ENCODE measurements at regions of chr18 and their contacts with region 1.

Region 1: GRCh38 chr18:46917108-46917802 is at the starts of genes KATNAL2 and PIAS2:
- DNase-seq: peak; percentile 83
- ATAC-seq: peak; percentile 92
- H3K4me3 Mint-ChIP-seq: peak within 1 kb of the TSS; percentile 92
- H3K27ac Mint-ChIP-seq: peak within 1 kb of the TSS; percentile 91
- H3K4me1 Mint-ChIP-seq: peaks cover 45% of the 10 kb centered on the region
- H3K27me3 Mint-ChIP-seq: no peaks in the 10 kb centered on the region
- total RNA-seq, gene KATNAL2: 1.1 to 1.4 TPM
- total RNA-seq, gene PIAS2: 27.1 to 28.2 TPM

Region 2: GRCh38 chr18:46250084-46250811 is 667.0 kb before region 1 on chr18:
- CTCF ChIA-PET with region 1: no interaction called
- POLR2A ChIA-PET with region 1: no interaction called
- intact Hi-C with region 1: loop called in 1 of 2 experiments (anchors 2 kb)
- DNase-seq: peak; percentile 61
- ATAC-seq: peak; percentile 90
- H3K4me3 Mint-ChIP-seq: peak overlapping the region; percentile 62
- H3K27ac Mint-ChIP-seq: peak overlapping the region; percentile 97
- H3K4me1 Mint-ChIP-seq: peaks cover 64% of the 10 kb centered on the region
- H3K27me3 Mint-ChIP-seq: no peaks in the 10 kb centered on the region

Region 3: GRCh38 chr18:46821856-46822711 is 95.2 kb before region 1 on chr18:
- CTCF ChIA-PET with region 1: no interaction called
- POLR2A ChIA-PET with region 1: interaction called, 3 read pairs
- intact Hi-C with region 1: loop called in 1 of 2 experiments (anchors 5 kb)
- DNase-seq: no peak
- ATAC-seq: peak; percentile 75
- H3K4me3 Mint-ChIP-seq: no peak overlapping the region
- H3K27ac Mint-ChIP-seq: peak overlapping the region; percentile 63
- H3K4me1 Mint-ChIP-seq: peaks cover 18% of the 10 kb centered on the region
- H3K27me3 Mint-ChIP-seq: no peaks in the 10 kb centered on the region

Region 4: GRCh38 chr18:46899274-46899948 is 17.8 kb before region 1 on chr18:
- CTCF ChIA-PET with region 1: no interaction called
- POLR2A ChIA-PET with region 1: no interaction called
- intact Hi-C with region 1: no loop called
- DNase-seq: no peak
- ATAC-seq: no peak
- H3K4me3 Mint-ChIP-seq: no peak overlapping the region
- H3K27ac Mint-ChIP-seq: no peak overlapping the region
- H3K4me1 Mint-ChIP-seq: peaks cover 9% of the 10 kb centered on the region
- H3K27me3 Mint-ChIP-seq: no peaks in the 10 kb centered on the region

Region 5: GRCh38 chr18:47150029-47150823 is 233.0 kb after region 1 on chr18 and contains the start of gene HDHD2:
- CTCF ChIA-PET with region 1: no interaction called
- POLR2A ChIA-PET with region 1: interaction called, 3 read pairs
- intact Hi-C with region 1: loop called in 1 of 2 experiments (anchors 2 kb)
- DNase-seq: peak; percentile 88
- ATAC-seq: peak; percentile 89
- H3K4me3 Mint-ChIP-seq: peak within 1 kb of the TSS; percentile 98
- H3K27ac Mint-ChIP-seq: peak within 1 kb of the TSS; percentile 98
- H3K4me1 Mint-ChIP-seq: peaks cover 41% of the 10 kb centered on the region
- H3K27me3 Mint-ChIP-seq: no peaks in the 10 kb centered on the region
- total RNA-seq, gene HDHD2: 27.7 to 28.9 TPM